AG04450 (cell line): ENCODE measurements at regions of chr10 and their contacts with region 1.

Region 1: DNA sequence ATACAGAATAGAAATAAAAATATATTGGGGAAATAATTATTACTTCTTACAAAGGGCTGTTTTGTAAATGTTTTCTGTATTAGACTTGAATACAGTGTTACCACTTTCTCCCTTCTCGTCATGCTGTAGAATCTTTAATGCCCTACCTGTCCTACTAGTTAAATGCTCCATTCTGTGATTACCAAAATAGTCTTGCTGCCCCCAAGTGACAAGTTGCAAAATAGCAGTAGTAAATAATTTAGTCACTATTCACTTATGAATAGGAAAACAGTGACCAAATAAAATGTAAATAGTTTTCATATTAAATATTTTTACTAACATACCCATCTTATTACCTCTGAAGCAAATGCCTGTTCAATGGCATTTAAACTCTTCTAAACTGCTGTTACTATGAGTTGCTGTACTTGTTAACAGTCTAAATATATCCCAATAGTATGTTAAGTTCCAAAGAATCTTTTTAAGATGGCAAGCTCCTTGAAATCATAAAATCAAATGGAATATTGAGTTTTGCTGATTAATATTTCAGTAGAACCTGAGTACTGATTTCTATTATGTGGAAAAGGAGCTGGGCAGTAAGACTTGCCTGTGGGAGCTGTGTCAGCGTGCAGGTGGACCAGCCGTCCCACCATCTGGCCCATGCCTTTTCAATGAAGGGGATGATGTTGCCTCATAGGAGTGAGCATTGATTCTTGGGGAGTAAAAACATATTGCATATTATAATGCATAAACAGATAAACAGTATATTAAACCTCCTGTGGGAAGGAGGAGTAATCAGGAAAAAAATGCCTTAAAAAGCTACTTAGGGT is 18.1 kb upstream of the OIT3 start:
- DNase-seq: peak; percentile 4
- H3K4me3 ChIP-seq: no peak overlapping the region
- H3K27ac ChIP-seq: no peak overlapping the region
- H3K27me3 ChIP-seq: no peaks in the 10 kb centered on the region
- CTCF ChIP-seq: peak; percentile 61

Region 2: DNA sequence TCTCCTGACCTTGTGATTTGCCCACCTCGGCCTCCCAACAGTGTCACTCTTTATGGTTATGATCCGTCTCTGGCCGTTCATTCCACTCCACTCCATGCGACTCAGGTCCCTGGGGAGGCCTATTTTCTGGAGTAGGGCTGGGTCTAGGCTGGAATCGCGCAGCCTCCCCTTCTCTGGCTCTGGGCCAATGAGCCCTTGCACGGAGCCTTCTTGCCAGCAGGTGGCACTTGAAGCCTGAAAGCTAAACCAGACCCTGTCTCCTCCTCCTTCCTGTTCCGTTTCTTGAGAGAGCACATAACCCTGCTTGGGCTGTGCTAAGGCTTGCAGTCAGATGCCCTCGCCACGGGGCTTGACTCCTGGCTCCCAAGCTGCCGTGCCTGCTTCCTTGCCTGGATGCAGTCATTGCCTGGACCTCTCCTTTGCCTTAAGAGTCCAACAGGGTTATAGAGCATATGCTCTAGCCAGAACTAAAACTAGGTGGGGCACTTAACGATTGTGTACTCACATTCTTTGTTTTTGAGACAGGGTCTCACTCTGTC is 511.1 kb before region 1 on chr10:
- CTCF ChIA-PET with region 1: interaction called, 18 read pairs
- POLR2A ChIA-PET with region 1: no interaction called
- DNase-seq: peak; percentile 88
- H3K4me3 ChIP-seq: no peak overlapping the region; the same call in 1 of the 2 replicates
- H3K27ac ChIP-seq: peak overlapping the region; percentile 95
- H3K27me3 ChIP-seq: no peaks in the 10 kb centered on the region
- CTCF ChIP-seq: peak; percentile 97

Region 3: DNA sequence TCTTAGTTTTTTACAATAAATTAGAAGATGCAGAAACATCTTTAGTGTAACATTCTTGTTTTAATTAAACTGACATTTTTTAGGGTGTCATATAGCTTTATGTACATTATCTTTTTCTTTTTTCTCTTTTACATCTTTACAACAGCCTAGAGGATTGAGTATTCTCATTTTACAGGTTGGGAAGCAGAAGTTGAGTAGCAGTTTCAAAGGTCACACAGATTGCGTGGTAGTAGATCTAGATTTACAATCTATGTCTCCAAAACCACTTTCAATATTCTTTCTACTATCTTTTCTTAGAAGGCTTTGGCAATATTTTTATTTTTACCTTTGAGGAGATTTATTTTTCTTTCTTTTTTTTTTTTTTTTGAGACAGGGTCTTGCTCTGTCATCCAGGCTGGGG is 202.2 kb before region 1 on chr10:
- CTCF ChIA-PET with region 1: no interaction called
- POLR2A ChIA-PET with region 1: no interaction called
- DNase-seq: no peak
- H3K4me3 ChIP-seq: no peak overlapping the region
- H3K27ac ChIP-seq: no peak overlapping the region
- H3K27me3 ChIP-seq: no peaks in the 10 kb centered on the region
- CTCF ChIP-seq: no peak

Region 4: GRCh38 chr10:72954596-72955554 is 79.4 kb after region 1 on chr10 and contains the start of gene PLA2G12B:
- CTCF ChIA-PET with region 1: no interaction called
- POLR2A ChIA-PET with region 1: no interaction called
- DNase-seq: no peak
- H3K4me3 ChIP-seq: no peak within 1 kb of the TSS
- H3K27ac ChIP-seq: no peak within 1 kb of the TSS
- H3K27me3 ChIP-seq: peaks cover 11% of the 10 kb centered on the region
- CTCF ChIP-seq: no peak
- polyA plus RNA-seq, gene PLA2G12B: not detected in 2 replicates